PC-9 (cell line): ENCODE measurements at regions of chr2 and their contacts with region 1.

Region 1: GRCh38 chr2:170324640-170325046 is 146.7 kb downstream of the MYO3B start:
- DNase-seq: peak; percentile 35 to 67
- H3K4me3 ChIP-seq: no peak overlapping the region
- H3K27ac ChIP-seq: no peak overlapping the region
- H3K4me1 ChIP-seq: no peaks in the 10 kb centered on the region
- H3K27me3 ChIP-seq: no peaks in the 10 kb centered on the region
- CTCF ChIP-seq: peak; percentile 81

Region 2: DNA sequence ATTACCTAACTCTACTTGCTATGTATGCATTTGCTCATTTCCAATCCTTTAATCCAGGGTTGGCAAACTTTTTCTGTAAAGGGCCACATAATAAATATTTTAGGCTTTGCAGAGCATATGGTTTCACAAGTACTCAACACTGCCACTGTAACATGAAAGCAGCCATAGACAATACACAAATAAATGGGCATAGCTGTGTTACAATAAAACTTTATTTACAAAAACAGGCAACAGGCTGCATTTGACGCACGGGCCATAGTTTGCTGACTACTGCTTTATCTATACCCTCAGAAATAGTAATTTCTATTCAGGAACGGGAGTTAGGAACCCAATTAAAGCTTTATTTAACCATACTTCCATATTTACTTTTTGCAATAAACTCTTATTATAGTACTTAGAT is 1116.6 kb before region 1 on chr2:
- CTCF ChIA-PET with region 1: no interaction called
- POLR2A ChIA-PET with region 1: no interaction called
- intact Hi-C with region 1: no loop called
- DNase-seq: no peak
- H3K4me3 ChIP-seq: no peak overlapping the region
- H3K27ac ChIP-seq: no peak overlapping the region
- H3K4me1 ChIP-seq: no peaks in the 10 kb centered on the region
- H3K27me3 ChIP-seq: no peaks in the 10 kb centered on the region; the same call in 1 of the 2 replicates
- CTCF ChIP-seq: no peak

Region 3: DNA sequence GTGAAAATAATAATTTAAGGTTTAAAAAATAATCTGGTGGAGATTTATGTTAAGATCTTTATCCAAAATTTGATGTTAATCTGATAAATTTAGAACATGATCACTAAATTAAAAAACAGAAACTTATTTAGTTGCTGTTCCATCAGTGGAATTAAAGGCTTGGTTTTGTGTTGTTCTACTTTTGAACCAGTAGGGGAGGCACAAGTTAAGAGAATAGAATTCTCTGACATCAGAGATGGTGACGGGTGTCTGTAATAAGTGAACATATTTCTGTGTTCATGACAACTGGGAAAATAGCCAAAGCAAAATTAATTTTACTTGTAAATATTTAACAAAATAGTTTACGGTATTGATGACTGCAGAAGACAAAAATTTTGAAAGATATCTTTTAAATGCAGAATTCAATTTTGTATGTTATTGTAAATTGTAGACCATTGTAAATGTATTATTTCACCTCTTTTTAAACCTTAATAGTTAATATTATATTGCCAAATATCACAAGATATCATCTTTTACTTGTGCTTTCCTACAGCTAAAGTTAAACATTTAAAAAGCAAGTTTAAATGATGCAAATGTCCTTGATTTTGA is 391.4 kb before region 1 on chr2:
- CTCF ChIA-PET with region 1: no interaction called
- POLR2A ChIA-PET with region 1: no interaction called
- intact Hi-C with region 1: loop called (anchors 1 kb)
- DNase-seq: no peak
- H3K4me3 ChIP-seq: no peak overlapping the region
- H3K27ac ChIP-seq: no peak overlapping the region
- H3K4me1 ChIP-seq: no peaks in the 10 kb centered on the region
- H3K27me3 ChIP-seq: no peaks in the 10 kb centered on the region
- CTCF ChIP-seq: peak; percentile 72

Region 4: GRCh38 chr2:170241756-170242155 is 82.9 kb before region 1 on chr2:
- CTCF ChIA-PET with region 1: interaction called, 10 read pairs
- POLR2A ChIA-PET with region 1: no interaction called
- intact Hi-C with region 1: no loop called
- DNase-seq: no peak
- H3K4me3 ChIP-seq: no peak overlapping the region
- H3K27ac ChIP-seq: no peak overlapping the region
- H3K4me1 ChIP-seq: no peaks in the 10 kb centered on the region
- H3K27me3 ChIP-seq: no peaks in the 10 kb centered on the region
- CTCF ChIP-seq: no peak

Region 5: DNA sequence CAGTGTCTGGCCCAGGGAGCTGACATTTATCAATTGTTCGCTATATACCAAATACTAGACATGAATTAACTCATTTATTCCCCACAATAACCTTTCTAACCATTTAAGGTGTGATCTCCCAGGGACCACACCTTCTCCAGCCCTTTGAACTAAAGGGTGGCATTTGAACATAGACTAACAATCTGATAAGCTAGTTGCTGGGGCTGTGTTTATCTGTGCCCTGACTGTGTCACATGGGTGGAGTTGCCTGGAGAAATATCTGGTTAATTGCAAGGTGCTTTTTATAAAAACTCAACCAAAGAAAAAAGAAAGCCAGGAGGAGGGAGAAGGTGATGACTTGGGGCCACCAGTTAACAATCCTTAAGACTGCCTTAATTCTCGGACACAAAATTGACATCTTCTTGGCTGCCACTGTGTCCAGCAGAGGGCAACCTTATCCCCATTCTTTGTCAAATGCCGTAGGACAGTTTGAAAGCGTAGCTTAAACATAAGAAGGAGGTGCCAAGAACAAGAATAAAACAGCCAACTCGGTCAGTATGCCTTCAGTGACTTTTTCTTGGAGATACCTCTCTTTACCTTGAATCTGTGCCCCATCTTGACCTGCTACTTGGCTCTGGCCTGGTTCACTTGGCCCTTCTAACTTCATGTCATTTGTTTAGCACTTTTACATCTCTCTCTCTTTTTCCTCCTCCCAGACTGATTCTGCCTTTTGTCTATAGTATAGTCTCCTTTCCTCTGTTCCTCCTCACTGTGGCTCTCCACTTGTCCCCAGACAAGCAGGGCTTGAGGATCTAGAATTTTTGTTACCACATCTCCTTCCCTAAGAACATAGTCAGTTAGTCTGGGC is 36.7 kb after region 1 on chr2:
- CTCF ChIA-PET with region 1: interaction called, 4 read pairs
- POLR2A ChIA-PET with region 1: no interaction called
- intact Hi-C with region 1: loop called (anchors 2 kb)
- DNase-seq: peak in 1 of 2 experiments; percentile 50
- H3K4me3 ChIP-seq: no peak overlapping the region
- H3K27ac ChIP-seq: no peak overlapping the region
- H3K4me1 ChIP-seq: no peaks in the 10 kb centered on the region
- H3K27me3 ChIP-seq: no peaks in the 10 kb centered on the region
- CTCF ChIP-seq: peak; percentile 80

Region 6: GRCh38 chr2:170369894-170370293 is 45.3 kb after region 1 on chr2:
- CTCF ChIA-PET with region 1: interaction called, 10 read pairs
- POLR2A ChIA-PET with region 1: no interaction called
- intact Hi-C with region 1: no loop called
- DNase-seq: no peak
- H3K4me3 ChIP-seq: no peak overlapping the region
- H3K27ac ChIP-seq: no peak overlapping the region
- H3K4me1 ChIP-seq: peaks cover 22% of the 10 kb centered on the region
- H3K27me3 ChIP-seq: no peaks in the 10 kb centered on the region
- CTCF ChIP-seq: peak; percentile 67

Region 7: GRCh38 chr2:170873035-170873692 is 548.5 kb after region 1 on chr2:
- CTCF ChIA-PET with region 1: no interaction called
- POLR2A ChIA-PET with region 1: no interaction called
- intact Hi-C with region 1: loop called (anchors 5 kb)
- DNase-seq: peak; percentile 52 to 77
- H3K4me3 ChIP-seq: peak overlapping the region; percentile 18; the same call in 1 of the 2 replicates
- H3K27ac ChIP-seq: no peak overlapping the region
- H3K4me1 ChIP-seq: no peaks in the 10 kb centered on the region
- H3K27me3 ChIP-seq: peaks cover 3% of the 10 kb centered on the region
- CTCF ChIP-seq: peak; percentile 93